ENCODE measurements at regions of chr1 and their contacts with region 1.

Region 1: DNA sequence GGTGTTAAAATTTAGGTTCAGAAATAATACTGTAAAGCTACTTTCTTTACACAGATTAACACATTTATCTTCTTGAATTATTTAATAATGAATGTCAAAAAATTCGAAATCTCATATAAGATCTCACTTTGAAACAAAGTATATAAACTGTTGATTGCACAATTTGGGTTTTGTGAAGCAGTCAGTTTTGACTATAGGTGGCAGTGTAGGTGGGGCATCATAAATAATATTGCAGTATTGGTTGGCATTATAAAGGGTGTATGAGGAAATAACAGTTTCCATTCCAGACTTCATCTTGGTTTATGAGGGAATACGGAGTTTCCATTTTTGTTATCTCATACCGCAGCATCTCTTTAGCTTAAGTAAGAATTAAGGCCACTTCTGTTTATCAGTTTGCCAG is 49.9 kb downstream of the SUCO start:
- DNase-seq: no peak
- H3K4me3 ChIP-seq: no peak overlapping the region
- H3K27ac ChIP-seq: no peak overlapping the region
- H3K4me1 ChIP-seq: peaks cover 12% of the 10 kb centered on the region
- H3K27me3 ChIP-seq: no peaks in the 10 kb centered on the region
- CTCF ChIP-seq: peak; percentile 22 to 41

Region 2: GRCh38 chr1:172532700-172533509 is 50.0 kb before region 1 on chr1 and contains the start of gene SUCO:
- CTCF ChIA-PET with region 1: no interaction called
- dilution Hi-C with region 1: no loop called
- in situ Hi-C with region 1: no loop called
- intact Hi-C with region 1: loop called (anchors 1 kb)
- DNase-seq: peak; percentile 100
- H3K4me3 ChIP-seq: peak within 1 kb of the TSS; percentile 94 to 97 (median 95)
- H3K27ac ChIP-seq: peak within 1 kb of the TSS; percentile 90
- H3K4me1 ChIP-seq: peaks cover 20% of the 10 kb centered on the region
- H3K27me3 ChIP-seq: no peaks in the 10 kb centered on the region
- CTCF ChIP-seq: peak in 1 of 2 donors; percentile 28
- total RNA-seq, gene SUCO: 31.9 to 36.2 TPM

Region 3: DNA sequence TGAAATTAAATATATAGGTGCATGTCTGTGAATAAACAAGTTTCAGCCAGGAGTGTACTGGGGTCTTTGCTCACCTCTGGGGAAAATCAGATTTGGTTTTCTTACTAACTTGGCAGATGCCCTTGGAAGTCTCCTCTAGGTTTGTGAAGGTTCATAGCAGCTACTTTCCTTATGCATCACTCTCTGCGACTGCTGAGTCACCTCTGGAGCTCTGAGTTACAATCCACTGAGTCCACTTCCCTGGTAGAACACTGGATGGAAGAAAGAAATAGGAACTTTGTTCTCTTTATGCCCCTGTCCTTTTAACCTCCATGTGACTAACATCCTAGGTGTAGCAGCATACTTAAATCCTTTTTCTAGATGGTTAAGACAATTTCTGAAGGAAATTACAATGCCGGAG is 71.6 kb after region 1 on chr1:
- CTCF ChIA-PET with region 1: no interaction called
- dilution Hi-C with region 1: no loop called
- in situ Hi-C with region 1: no loop called
- intact Hi-C with region 1: no loop called
- DNase-seq: peak; percentile 76
- H3K4me3 ChIP-seq: no peak overlapping the region
- H3K27ac ChIP-seq: no peak overlapping the region
- H3K4me1 ChIP-seq: peaks cover 18% of the 10 kb centered on the region
- H3K27me3 ChIP-seq: no peaks in the 10 kb centered on the region
- CTCF ChIP-seq: no peak